ENCODE measurements at regions of chr3 and their contacts with region 1.

Region 1: GRCh38 chr3:53122933-53123305 is 7.3 kb downstream of the RFT1 start:
- DNase-seq: peak in 1 of 7 donors; percentile 50
- H3K4me3 ChIP-seq: no peak overlapping the region
- H3K27ac ChIP-seq: peak overlapping the region in 3 of 5 donors; percentile 48 to 62 (median 61)
- H3K4me1 ChIP-seq: peaks cover 11% of the 10 kb centered on the region in 2 donors
- H3K27me3 ChIP-seq: no peaks in the 10 kb centered on the region
- CTCF ChIP-seq: no peak
- POLR2A ChIP-seq: no peak

Region 2: GRCh38 chr3:53160660-53161449 is 37.9 kb after region 1 on chr3 and contains the start of gene PRKCD:
- intact Hi-C with region 1: loop called in 1 of 2 experiments (anchors 5 kb)
- DNase-seq: peak; percentile 90 to 96 (median 94)
- H3K4me3 ChIP-seq: peak within 1 kb of the TSS; percentile 53 to 99 (median 68)
- H3K27ac ChIP-seq: peak within 1 kb of the TSS; percentile 42 to 99 (median 79)
- H3K4me1 ChIP-seq: peaks cover 46 to 73% of the 10 kb centered on the region in 2 donors
- H3K27me3 ChIP-seq: no peaks in the 10 kb centered on the region
- CTCF ChIP-seq: peak; percentile 53 to 82 (median 72)
- POLR2A ChIP-seq: peak; percentile 43 to 86
- total RNA-seq, gene PRKCD: 10.7 to 156 (median 49.7) TPM

Region 3: GRCh38 chr3:53531749-53532148 is 408.8 kb after region 1 on chr3:
- intact Hi-C with region 1: no loop called
- DNase-seq: no peak
- H3K4me3 ChIP-seq: no peak overlapping the region
- H3K27ac ChIP-seq: no peak overlapping the region
- H3K4me1 ChIP-seq: peaks cover 16 to 36% of the 10 kb centered on the region in 2 donors
- H3K27me3 ChIP-seq: no peaks in the 10 kb centered on the region
- CTCF ChIP-seq: no peak
- POLR2A ChIP-seq: no peak

Measured in adrenal gland (tissue), 19 donors.